ENCODE measurements at regions of chr1 and their contacts with region 1.

Region 1: GRCh38 chr1:35753626-35754260 is 16.0 kb downstream of the CLSPN start:
- DNase-seq: no peak
- ATAC-seq: no peak
- H3K4me3 Mint-ChIP-seq: no peak overlapping the region
- H3K27ac Mint-ChIP-seq: no peak overlapping the region
- H3K4me1 Mint-ChIP-seq: peaks cover 4% of the 10 kb centered on the region
- H3K27me3 Mint-ChIP-seq: no peaks in the 10 kb centered on the region
- CTCF ChIP-seq: no peak

Region 2: GRCh38 chr1:35769188-35769758 is 15.5 kb after region 1 on chr1:
- CTCF ChIA-PET with region 1: interaction called, 4 read pairs
- POLR2A ChIA-PET with region 1: interaction called, 21 read pairs
- intact Hi-C with region 1: no loop called
- DNase-seq: peak; percentile 91
- ATAC-seq: peak; percentile 83
- H3K4me3 Mint-ChIP-seq: peak overlapping the region; percentile 86
- H3K27ac Mint-ChIP-seq: peak overlapping the region; percentile 81
- H3K4me1 Mint-ChIP-seq: peaks cover 14% of the 10 kb centered on the region
- H3K27me3 Mint-ChIP-seq: no peaks in the 10 kb centered on the region
- CTCF ChIP-seq: peak; percentile 29

Region 3: DNA sequence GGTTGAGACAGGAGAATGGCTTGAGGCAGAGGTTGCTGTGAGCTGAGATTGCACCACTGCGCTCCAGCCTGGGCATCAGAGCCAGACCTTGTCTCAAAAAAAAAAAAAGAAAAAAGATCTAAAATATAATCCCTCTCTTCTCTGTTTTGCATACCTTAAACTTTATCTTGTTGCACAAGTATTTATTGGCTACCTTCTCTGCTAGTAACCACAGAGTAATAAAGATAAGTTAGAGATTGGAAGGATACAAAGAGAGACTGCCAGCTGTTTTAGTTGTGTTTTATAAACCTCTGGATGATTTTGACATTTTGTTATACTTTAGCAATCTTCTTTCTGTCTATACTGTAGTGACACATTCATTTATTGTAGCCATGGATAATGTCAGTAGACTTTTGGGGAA is 204.8 kb after region 1 on chr1:
- CTCF ChIA-PET with region 1: no interaction called
- POLR2A ChIA-PET with region 1: no interaction called
- intact Hi-C with region 1: no loop called
- DNase-seq: no peak
- ATAC-seq: no peak
- H3K4me3 Mint-ChIP-seq: no peak overlapping the region
- H3K27ac Mint-ChIP-seq: no peak overlapping the region
- H3K4me1 Mint-ChIP-seq: peaks cover 2% of the 10 kb centered on the region
- H3K27me3 Mint-ChIP-seq: no peaks in the 10 kb centered on the region
- CTCF ChIP-seq: no peak

Measured in activated CD8-positive, alpha-beta T cell treated with anti-CD3 and anti-CD28 coated beads for 36 hours (primary cell).